ENCODE measurements at regions of chr4 and their contacts with region 1.

Region 1: GRCh38 chr4:27000820-27001219 is 140.2 kb downstream of the STIM2 start:
- DNase-seq: no peak
- ATAC-seq: peak; percentile 40
- H3K4me3 Mint-ChIP-seq: no peak overlapping the region
- H3K27ac Mint-ChIP-seq: no peak overlapping the region
- H3K4me1 Mint-ChIP-seq: peaks cover 59% of the 10 kb centered on the region
- H3K27me3 Mint-ChIP-seq: no peaks in the 10 kb centered on the region
- CTCF ChIP-seq: peak; percentile 48

Region 2: GRCh38 chr4:26319467-26319948 is 681.3 kb before region 1 on chr4:
- CTCF ChIA-PET with region 1: no interaction called
- POLR2A ChIA-PET with region 1: no interaction called
- intact Hi-C with region 1: loop called (anchors 10 kb)
- DNase-seq: peak; percentile 99
- ATAC-seq: peak; percentile 67
- H3K4me3 Mint-ChIP-seq: peak overlapping the region; percentile 92
- H3K27ac Mint-ChIP-seq: peak overlapping the region; percentile 100
- H3K4me1 Mint-ChIP-seq: peaks cover 34% of the 10 kb centered on the region
- H3K27me3 Mint-ChIP-seq: no peaks in the 10 kb centered on the region
- CTCF ChIP-seq: no peak

Region 3: GRCh38 chr4:26583865-26584652 is 416.8 kb before region 1 on chr4 and contains the start of gene TBC1D19:
- CTCF ChIA-PET with region 1: interaction called, 5 read pairs
- POLR2A ChIA-PET with region 1: no interaction called
- intact Hi-C with region 1: loop called (anchors 10 kb)
- DNase-seq: peak; percentile 91
- ATAC-seq: peak; percentile 96
- H3K4me3 Mint-ChIP-seq: peak within 1 kb of the TSS; percentile 96
- H3K27ac Mint-ChIP-seq: peak within 1 kb of the TSS; percentile 96
- H3K4me1 Mint-ChIP-seq: peaks cover 21% of the 10 kb centered on the region
- H3K27me3 Mint-ChIP-seq: peaks cover 2% of the 10 kb centered on the region
- CTCF ChIP-seq: no peak
- total RNA-seq, gene TBC1D19: 4.0 to 4.5 TPM

Region 4: GRCh38 chr4:26746802-26747213 is 254.0 kb before region 1 on chr4:
- CTCF ChIA-PET with region 1: no interaction called
- POLR2A ChIA-PET with region 1: no interaction called
- intact Hi-C with region 1: loop called (anchors 5 kb)
- DNase-seq: peak; percentile 75
- ATAC-seq: peak; percentile 100
- H3K4me3 Mint-ChIP-seq: no peak overlapping the region
- H3K27ac Mint-ChIP-seq: peak overlapping the region; percentile 12
- H3K4me1 Mint-ChIP-seq: peaks cover 10% of the 10 kb centered on the region
- H3K27me3 Mint-ChIP-seq: no peaks in the 10 kb centered on the region
- CTCF ChIP-seq: no peak

Region 5: DNA sequence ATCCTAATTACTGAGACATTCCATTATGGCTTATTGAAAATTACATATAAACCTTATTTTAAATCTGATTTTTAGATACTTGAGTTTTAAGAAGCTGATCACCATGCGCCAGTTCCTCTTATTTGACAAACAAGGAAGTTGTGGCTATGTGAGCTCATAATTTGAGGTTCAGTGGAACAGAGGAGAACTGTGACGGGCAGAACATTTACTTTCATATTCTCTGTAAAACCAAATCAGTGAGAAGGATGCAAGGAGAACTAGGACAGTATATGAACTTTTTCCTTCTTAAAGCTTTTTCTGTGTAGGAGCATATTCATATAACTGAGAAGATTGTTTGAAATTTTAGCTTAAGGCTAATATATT is 114.9 kb before region 1 on chr4:
- CTCF ChIA-PET with region 1: interaction called, 20 read pairs
- POLR2A ChIA-PET with region 1: interaction called, 8 read pairs
- intact Hi-C with region 1: no loop called
- DNase-seq: peak; percentile 58
- ATAC-seq: peak; percentile 52
- H3K4me3 Mint-ChIP-seq: peak overlapping the region; percentile 62
- H3K27ac Mint-ChIP-seq: peak overlapping the region; percentile 96
- H3K4me1 Mint-ChIP-seq: peaks cover 68% of the 10 kb centered on the region
- H3K27me3 Mint-ChIP-seq: no peaks in the 10 kb centered on the region
- CTCF ChIP-seq: no peak

Region 6: GRCh38 chr4:26959654-26960047 is 41.2 kb before region 1 on chr4:
- CTCF ChIA-PET with region 1: interaction called, 3 read pairs
- POLR2A ChIA-PET with region 1: no interaction called
- intact Hi-C with region 1: loop called (anchors 5 kb)
- DNase-seq: no peak
- ATAC-seq: peak; percentile 38
- H3K4me3 Mint-ChIP-seq: no peak overlapping the region
- H3K27ac Mint-ChIP-seq: peak overlapping the region; percentile 72
- H3K4me1 Mint-ChIP-seq: peaks cover 53% of the 10 kb centered on the region
- H3K27me3 Mint-ChIP-seq: no peaks in the 10 kb centered on the region
- CTCF ChIP-seq: no peak